ENCODE measurements at regions of chr6 and their contacts with region 1.

Region 1: DNA sequence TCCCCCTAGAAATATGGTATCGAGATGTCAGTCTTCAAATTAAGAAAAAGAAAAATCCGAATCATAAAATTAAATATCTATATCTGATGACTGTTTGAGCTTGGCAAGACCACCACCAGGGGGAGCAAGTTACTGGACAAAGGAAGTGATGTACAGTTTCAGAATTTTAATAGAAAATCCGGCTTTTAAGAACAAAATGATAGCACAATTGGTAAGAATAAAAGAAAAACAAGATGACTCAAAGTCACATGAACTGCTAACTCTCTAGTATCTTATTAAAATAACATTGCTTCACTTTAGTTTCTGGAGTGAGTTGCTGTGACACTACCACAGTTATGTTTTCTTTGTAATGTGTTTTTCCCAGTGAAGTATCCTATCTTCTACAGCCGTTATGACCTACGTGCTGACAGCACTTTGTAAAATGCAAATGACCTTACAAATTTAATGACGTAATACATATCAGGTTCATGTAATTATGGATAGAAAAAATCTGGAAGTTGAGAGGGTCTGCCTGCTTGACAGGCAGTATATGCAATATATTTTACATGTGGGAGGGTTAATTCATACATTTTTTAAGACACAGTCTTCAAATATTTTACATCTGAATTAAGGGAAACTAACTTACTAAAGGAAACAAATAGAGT is 405.3 kb upstream of the HS3ST5 start:
- DNase-seq: peak; percentile 41 to 43
- H3K4me3 ChIP-seq: no peak overlapping the region
- H3K27ac ChIP-seq: no peak overlapping the region
- H3K4me1 ChIP-seq: no peaks in the 10 kb centered on the region
- H3K27me3 ChIP-seq: no peaks in the 10 kb centered on the region
- CTCF ChIP-seq: peak; percentile 96

Region 2: DNA sequence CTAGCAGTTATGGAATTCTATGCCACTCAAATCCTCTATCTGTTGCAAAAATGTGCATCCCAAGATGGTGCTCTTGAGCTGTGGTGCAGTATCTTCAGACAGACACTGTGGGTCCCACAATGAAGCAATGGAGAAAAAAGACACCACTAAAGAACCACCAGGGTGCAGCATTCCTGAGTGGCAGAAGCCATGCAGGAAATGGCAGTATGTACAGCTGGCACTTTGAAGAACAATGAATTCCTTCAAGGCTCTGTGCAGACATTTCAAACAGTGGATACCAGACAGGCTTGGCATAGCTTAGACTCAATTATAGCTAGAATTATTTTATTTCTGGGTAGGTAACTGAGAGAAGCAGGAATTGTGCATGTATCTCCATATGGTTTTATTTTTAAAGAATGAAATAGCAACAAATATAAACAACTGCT is 753.2 kb before region 1 on chr6:
- CTCF ChIA-PET with region 1: no interaction called
- POLR2A ChIA-PET with region 1: no interaction called
- intact Hi-C with region 1: loop called (anchors 10 kb)
- DNase-seq: peak; percentile 65 to 66
- H3K4me3 ChIP-seq: no peak overlapping the region
- H3K27ac ChIP-seq: no peak overlapping the region
- H3K4me1 ChIP-seq: 0 out of 2 replicates have a peak, but pooled peaks cover 16% of the 10 kb centered on the region
- H3K27me3 ChIP-seq: no peaks in the 10 kb centered on the region
- CTCF ChIP-seq: peak; percentile 75

Region 3: DNA sequence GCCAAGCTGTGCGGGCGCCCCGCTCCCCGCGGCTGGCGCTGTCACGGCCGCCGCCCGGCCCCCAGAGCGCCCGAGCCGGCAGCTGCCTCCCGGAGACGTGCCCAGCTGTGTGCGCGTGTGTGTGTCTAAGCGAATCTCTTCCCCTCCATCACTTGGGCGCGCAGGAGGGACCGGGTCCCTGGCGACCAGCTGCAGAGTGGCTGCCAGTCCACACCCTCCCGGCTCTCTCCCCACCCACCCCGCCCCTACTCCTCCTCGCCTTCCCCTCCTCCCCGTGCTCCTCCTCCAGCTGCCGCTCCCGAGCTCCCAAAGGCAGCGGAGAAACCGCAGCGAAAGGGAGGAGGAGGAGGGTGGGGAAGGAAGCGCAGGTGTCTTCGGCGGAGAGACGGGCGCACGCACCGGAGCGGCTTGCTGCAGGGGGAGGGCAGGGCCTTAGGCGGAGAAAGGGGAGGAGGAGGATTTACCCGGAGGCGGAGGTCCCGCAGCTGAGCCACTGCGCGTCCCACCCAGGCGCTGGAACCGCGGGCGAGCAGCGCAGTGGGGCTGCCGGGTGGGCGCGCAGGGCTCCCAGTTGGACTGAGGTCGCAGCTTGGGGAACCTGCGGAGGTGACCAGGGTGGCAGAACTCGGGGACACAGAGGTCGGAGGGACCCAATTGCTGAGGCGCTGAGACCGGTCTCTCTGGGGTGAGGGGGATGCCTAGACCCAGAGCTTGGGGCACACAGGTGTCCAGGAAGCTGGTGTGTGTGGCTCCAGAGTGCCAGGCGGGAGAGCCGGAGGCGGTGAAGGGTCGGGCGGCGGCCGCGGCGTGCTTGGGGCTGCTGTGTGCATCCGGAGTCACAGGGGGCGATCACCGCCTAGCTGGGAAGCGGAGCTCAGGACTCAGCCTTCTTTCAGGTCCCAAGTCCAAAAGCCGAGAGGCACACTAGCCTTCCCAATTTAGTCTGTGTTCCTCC is 405.0 kb before region 1 on chr6 and contains the start of gene HS3ST5:
- CTCF ChIA-PET with region 1: no interaction called
- POLR2A ChIA-PET with region 1: no interaction called
- intact Hi-C with region 1: loop called (anchors 5 kb)
- DNase-seq: peak in 1 of 2 experiments; percentile 63
- H3K4me3 ChIP-seq: peak within 1 kb of the TSS; percentile 55; the same call in 1 of the 2 replicates
- H3K27ac ChIP-seq: no peak within 1 kb of the TSS
- H3K4me1 ChIP-seq: no peaks in the 10 kb centered on the region
- H3K27me3 ChIP-seq: peaks cover 31% of the 10 kb centered on the region
- CTCF ChIP-seq: no peak; the same call in none of the 2 replicates
- total RNA-seq, gene HS3ST5: 0.09 and 0.30 TPM in 2 replicates

Region 4: DNA sequence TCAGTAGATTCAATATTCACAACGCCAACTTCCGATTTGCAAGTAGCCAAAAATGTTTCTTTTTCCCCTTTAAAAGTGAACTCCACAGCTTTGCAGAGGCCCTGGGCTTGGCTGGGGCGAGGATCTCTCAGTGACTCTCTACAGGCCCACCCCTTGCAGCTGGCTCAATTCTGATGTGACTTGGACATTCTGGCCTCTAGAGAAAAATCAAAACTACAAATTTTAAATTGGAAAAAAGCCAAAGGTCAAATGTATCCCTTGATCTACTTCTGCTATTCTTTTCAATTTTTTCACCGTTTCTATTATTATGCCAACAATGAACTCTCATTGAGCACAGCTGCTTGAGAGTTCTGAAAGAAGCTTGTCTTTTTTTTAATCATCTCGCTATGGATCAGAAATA is 159.4 kb before region 1 on chr6:
- CTCF ChIA-PET with region 1: no interaction called
- POLR2A ChIA-PET with region 1: no interaction called
- intact Hi-C with region 1: no loop called
- DNase-seq: no peak
- H3K4me3 ChIP-seq: no peak overlapping the region
- H3K27ac ChIP-seq: no peak overlapping the region
- H3K4me1 ChIP-seq: no peaks in the 10 kb centered on the region
- H3K27me3 ChIP-seq: no peaks in the 10 kb centered on the region
- CTCF ChIP-seq: no peak

Region 5: DNA sequence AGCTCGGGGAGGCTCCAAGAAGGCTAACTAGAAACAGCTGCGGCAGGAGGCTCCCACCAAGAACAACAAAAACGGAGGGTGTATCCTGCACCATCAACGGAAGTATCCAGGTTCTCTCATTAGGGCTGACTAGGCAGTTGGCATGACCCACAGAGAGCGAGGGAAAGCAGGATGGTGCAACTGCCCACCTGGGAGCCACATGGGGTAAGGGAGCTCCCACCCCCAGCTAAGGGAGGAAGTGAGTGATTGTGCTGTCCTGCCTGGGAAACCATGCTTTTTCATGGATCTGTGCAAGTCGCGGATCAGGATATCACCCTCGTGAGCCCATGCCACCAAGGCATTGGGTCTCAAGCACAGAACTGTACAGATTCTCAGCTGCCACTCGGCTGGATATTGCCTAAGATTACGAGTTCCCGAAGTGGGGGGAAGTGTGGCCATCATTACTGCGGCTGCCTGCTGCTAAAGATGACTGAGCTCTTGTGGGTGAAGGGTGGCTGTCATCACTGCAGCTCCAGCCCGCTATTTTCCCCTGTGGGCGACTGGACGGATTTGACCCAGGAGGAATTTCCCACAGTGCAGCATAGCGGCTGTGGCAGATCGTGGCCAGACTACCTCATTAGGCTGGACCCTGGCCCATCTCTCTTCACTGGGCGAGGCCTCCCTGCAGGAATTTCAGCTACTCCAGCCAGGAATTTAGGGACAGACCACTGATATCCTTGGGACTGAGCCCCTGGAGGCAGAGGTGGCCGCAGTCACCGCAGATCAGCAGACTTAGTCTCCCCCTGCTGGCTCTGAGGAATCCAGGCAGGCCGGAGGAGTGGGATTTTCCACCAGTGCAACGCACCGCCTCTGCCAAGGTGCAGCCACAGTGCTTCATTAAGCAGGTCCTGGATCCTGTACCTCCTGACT is 796.9 kb after region 1 on chr6:
- CTCF ChIA-PET with region 1: interaction called, 4 read pairs
- POLR2A ChIA-PET with region 1: no interaction called
- intact Hi-C with region 1: loop called (anchors 5 kb)
- DNase-seq: peak in 1 of 2 experiments; percentile 28
- H3K4me3 ChIP-seq: no peak overlapping the region
- H3K27ac ChIP-seq: no peak overlapping the region
- H3K4me1 ChIP-seq: no peaks in the 10 kb centered on the region
- H3K27me3 ChIP-seq: no peaks in the 10 kb centered on the region
- CTCF ChIP-seq: peak; percentile 27; the same call in 1 of the 2 replicates

Region 6: DNA sequence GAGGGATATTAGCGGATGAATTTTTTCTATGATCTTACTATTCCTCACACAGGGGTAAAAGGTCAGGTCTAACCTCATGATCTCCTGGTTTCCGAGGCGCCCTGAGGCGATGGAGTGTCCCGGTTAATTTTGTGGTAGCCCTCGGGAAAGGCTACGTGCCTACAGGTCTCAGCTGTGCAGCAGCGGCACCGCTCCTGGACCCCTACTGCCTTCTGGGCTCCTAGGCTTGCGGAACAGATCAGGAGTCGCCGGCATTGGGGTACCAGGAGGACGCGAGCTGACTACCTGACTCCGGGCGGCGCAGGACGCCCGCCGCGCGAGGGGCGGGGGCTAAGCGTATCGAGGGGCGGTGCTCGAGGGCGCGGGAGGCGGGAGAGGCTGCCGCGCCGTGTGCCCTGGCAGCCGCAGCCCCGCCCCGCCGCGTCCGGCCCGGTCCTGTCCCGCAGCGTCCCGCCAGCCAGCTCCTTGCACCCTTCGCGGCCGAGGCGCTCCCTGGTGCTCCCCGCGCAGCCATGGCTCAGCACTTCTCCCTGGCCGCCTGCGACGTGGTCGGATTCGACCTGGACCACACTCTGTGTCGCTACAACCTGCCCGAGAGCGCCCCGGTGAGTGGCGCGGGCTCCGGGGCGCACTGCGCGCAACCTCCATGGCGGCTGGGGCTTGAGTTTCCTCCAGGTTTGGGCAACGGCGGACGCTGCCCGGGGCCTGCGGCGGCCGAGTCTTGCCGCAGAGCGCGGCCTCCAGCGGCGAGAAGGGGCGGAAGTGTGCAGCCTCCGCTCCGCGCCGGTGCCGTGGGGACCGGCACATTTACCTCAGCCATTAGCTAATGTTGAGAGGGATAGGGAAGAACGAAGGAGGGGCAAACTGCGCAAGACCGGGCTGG is 1352.6 kb after region 1 on chr6 and contains the start of gene NT5DC1:
- CTCF ChIA-PET with region 1: no interaction called
- POLR2A ChIA-PET with region 1: no interaction called
- intact Hi-C with region 1: loop called (anchors 5 kb)
- DNase-seq: peak; percentile 76 to 85
- H3K4me3 ChIP-seq: peak within 1 kb of the TSS; percentile 68
- H3K27ac ChIP-seq: peak within 1 kb of the TSS; percentile 61
- H3K4me1 ChIP-seq: peaks cover 22% of the 10 kb centered on the region
- H3K27me3 ChIP-seq: no peaks in the 10 kb centered on the region
- CTCF ChIP-seq: peak; percentile 61
- total RNA-seq, gene NT5DC1: 33.2 and 33.5 TPM in 2 replicates